Heart left ventricle (tissue), 16 donors: ENCODE measurements at regions of chr22 and their contacts with region 1.

Region 1: GRCh38 chr22:30485362-30485988 is 13.7 kb upstream of the SEC14L3 start:
- DNase-seq: peak; percentile 34 to 74 (median 60)
- ATAC-seq: peak in 3 of 4 donors; percentile 83 to 96 (median 87)
- H3K4me3 ChIP-seq: no peak overlapping the region
- H3K27ac ChIP-seq: no peak overlapping the region
- H3K4me1 ChIP-seq: no peaks in the 10 kb centered on the region
- H3K27me3 ChIP-seq: peaks cover 0 to 9% (median 0%) of the 10 kb centered on the region in 9 donors
- CTCF ChIP-seq: peak; percentile 85 to 99 (median 94)
- POLR2A ChIP-seq: no peak

Region 2: DNA sequence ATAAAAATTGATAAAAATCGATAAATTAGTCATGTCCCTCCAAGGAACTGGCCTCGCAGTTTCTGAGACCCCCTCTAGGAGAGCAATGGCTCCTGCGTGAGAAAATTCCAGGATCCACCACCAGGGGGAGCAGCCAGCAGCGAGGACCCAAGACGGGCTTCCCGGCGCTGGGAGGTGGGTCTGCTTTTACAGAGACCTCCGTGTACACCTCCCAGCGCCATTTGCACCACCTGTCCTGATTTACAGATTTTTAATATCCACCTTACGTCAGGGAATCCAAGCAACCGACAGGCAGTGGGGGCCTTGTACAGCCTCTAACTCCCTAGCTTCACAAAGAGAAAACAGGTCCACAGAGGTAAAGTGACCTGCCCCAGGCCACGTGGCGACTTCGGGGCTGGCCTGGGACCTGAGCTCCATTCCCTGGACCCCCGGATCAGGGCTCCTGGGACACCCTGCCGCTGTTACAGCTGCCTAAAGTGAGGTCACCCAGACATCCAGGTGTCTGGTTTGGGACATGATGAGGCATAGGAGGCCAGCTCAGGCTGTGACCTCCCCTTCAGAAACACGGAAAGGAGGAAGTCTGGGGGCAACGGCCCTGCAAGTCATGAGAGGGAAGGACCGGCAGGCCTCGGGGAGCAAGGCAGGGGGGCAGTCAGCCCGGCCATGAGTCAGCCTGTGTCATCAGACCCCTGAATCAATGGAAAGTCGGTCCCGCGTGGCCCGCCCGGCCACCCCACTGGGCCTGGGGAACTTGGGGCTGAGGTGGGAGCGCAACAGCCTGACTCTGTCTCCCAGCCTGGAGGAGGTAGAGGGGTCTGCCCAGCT is 222.3 kb before region 1 on chr22:
- intact Hi-C with region 1: loop called in 2 of 10 experiments (anchors 10 kb)
- DNase-seq: peak; percentile 68 to 87 (median 72)
- ATAC-seq: peak in 2 of 4 donors; percentile 49 to 53
- H3K4me3 ChIP-seq: peak overlapping the region in 6 of 12 donors; percentile 3 to 32 (median 11)
- H3K27ac ChIP-seq: peak overlapping the region in 1 of 12 donors; percentile 32
- H3K4me1 ChIP-seq: peaks cover 0 to 43% (median 0%) of the 10 kb centered on the region in 12 donors
- H3K27me3 ChIP-seq: peaks cover 0 to 12% (median 0%) of the 10 kb centered on the region in 9 donors
- CTCF ChIP-seq: peak; percentile 89 to 99 (median 97)
- POLR2A ChIP-seq: no peak

Region 3: GRCh38 chr22:30444632-30445437 is 40.6 kb before region 1 on chr22:
- intact Hi-C with region 1: no loop called
- DNase-seq: no peak
- ATAC-seq: peak in 3 of 4 donors; percentile 32 to 58 (median 49)
- H3K4me3 ChIP-seq: no peak overlapping the region
- H3K27ac ChIP-seq: no peak overlapping the region
- H3K4me1 ChIP-seq: peaks cover 0 to 12% (median 0%) of the 10 kb centered on the region in 12 donors
- H3K27me3 ChIP-seq: peaks cover 0 to 36% (median 0%) of the 10 kb centered on the region in 9 donors
- CTCF ChIP-seq: peak; percentile 48 to 77 (median 62)
- POLR2A ChIP-seq: no peak